GM12878 (cell line): ENCODE measurements at regions of chr22 and their contacts with region 1.

Region 1: DNA sequence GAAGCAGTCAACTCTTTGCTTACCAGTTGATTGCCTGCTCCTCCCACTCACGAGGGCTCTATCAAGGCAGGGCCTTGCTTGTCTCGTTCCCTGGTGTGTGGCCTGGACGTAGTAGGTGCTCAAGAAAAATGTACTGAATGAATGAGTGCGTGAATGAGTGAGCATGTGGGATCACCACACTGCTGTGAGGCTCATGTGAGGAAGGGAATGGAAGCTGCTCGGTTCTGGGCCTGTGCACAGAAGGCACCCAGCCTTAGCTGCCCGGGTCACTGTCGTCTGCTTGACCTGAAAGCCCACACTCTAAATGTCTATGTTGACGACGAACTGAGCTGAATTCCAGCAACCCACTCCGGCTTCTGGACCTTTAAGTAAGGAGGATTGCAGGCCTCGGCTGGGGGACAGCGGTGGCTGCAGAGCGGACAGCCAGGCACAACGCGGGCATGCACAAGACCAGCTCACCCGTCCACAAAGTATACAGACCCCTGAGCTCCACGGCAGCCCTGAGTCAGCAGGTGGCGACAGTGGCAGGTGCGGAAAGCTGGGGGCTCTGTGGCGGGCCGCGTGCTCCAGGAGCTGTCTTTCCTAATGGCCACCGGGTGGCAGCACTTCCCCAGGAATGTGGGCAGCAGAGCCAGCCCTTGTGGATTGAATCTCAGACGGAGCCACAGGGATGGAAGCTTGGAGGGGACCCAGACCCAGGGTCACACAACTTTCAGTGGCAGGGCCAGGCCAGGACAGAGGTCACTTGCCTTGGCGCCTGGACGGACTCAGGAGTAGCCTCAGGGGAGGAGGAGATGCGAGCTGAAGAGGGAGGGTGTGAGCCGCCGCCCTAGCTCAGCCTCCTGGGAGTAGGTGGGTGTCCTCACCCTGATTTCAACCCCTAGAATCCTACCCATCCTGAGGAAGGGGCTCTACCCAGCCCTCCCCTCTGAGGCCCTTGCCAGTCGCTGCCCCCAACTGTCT is 5.0 kb upstream of the PICK1 start:
- DNase-seq: peak; percentile 30
- ATAC-seq: peak; percentile 93
- H3K4me3 ChIP-seq: no peak overlapping the region
- H3K27ac ChIP-seq: no peak overlapping the region
- H3K4me1 ChIP-seq: no peaks in the 10 kb centered on the region; the same call in 1 of the 2 replicates
- H3K27me3 ChIP-seq: no peaks in the 10 kb centered on the region; a peak in 2 of 4 replicates
- CTCF ChIP-seq: peak; percentile 87 to 97 (median 94); a peak in 5 of 6 replicates
- EP300 ChIP-seq: no peak
- POLR2A ChIP-seq: no peak
- RAD21 ChIP-seq: peak; percentile 89

Region 2: GRCh38 chr22:36237462-36238372 is 1814.5 kb before region 1 on chr22:
- CTCF ChIA-PET with region 1: no interaction called
- POLR2A ChIA-PET with region 1: no interaction called
- RAD21 ChIA-PET with region 1: no interaction called
- SMC1A ChIA-PET with region 1: no interaction called
- in situ Hi-C with region 1: no loop called
- intact Hi-C with region 1: no loop called
- DNase-seq: no peak
- ATAC-seq: peak; percentile 18; the same call in 2 of the 3 replicates
- H3K4me3 ChIP-seq: peak overlapping the region; percentile 96
- H3K27ac ChIP-seq: peak overlapping the region; percentile 79
- H3K4me1 ChIP-seq: peaks cover 31% of the 10 kb centered on the region
- H3K27me3 ChIP-seq: no peaks in the 10 kb centered on the region
- CTCF ChIP-seq: no peak
- EP300 ChIP-seq: no peak
- POLR2A ChIP-seq: no peak
- RAD21 ChIP-seq: no peak

Region 3: GRCh38 chr22:38069372-38070249 is 17.4 kb after region 1 on chr22:
- CTCF ChIA-PET with region 1: interaction called, 17 read pairs
- POLR2A ChIA-PET with region 1: no interaction called
- RAD21 ChIA-PET with region 1: interaction called, 4 read pairs
- SMC1A ChIA-PET with region 1: no interaction called
- in situ Hi-C with region 1: no loop called
- intact Hi-C with region 1: no loop called
- DNase-seq: no peak
- ATAC-seq: no peak
- H3K4me3 ChIP-seq: no peak overlapping the region
- H3K27ac ChIP-seq: no peak overlapping the region
- H3K4me1 ChIP-seq: no peaks in the 10 kb centered on the region
- H3K27me3 ChIP-seq: no peaks in the 10 kb centered on the region
- CTCF ChIP-seq: peak in 2 of 3 experiments; percentile 14 to 27; a peak in 2 of 6 replicates
- EP300 ChIP-seq: no peak
- POLR2A ChIP-seq: no peak
- RAD21 ChIP-seq: peak; percentile 64

Region 4: GRCh38 chr22:38104084-38104483 is 51.9 kb after region 1 on chr22:
- CTCF ChIA-PET with region 1: interaction called, 34 read pairs
- POLR2A ChIA-PET with region 1: no interaction called
- RAD21 ChIA-PET with region 1: interaction called, 7 read pairs
- SMC1A ChIA-PET with region 1: interaction called, 5 read pairs
- in situ Hi-C with region 1: no loop called
- intact Hi-C with region 1: loop called (anchors 5 kb)
- DNase-seq: no peak
- ATAC-seq: peak; percentile 49; the same call in 1 of the 3 replicates
- H3K4me3 ChIP-seq: no peak overlapping the region
- H3K27ac ChIP-seq: no peak overlapping the region
- H3K4me1 ChIP-seq: no peaks in the 10 kb centered on the region
- H3K27me3 ChIP-seq: no peaks in the 10 kb centered on the region
- CTCF ChIP-seq: peak in 2 of 3 experiments; percentile 16 to 32; a peak in 3 of 6 replicates
- EP300 ChIP-seq: no peak
- POLR2A ChIP-seq: no peak
- RAD21 ChIP-seq: no peak

Region 5: DNA sequence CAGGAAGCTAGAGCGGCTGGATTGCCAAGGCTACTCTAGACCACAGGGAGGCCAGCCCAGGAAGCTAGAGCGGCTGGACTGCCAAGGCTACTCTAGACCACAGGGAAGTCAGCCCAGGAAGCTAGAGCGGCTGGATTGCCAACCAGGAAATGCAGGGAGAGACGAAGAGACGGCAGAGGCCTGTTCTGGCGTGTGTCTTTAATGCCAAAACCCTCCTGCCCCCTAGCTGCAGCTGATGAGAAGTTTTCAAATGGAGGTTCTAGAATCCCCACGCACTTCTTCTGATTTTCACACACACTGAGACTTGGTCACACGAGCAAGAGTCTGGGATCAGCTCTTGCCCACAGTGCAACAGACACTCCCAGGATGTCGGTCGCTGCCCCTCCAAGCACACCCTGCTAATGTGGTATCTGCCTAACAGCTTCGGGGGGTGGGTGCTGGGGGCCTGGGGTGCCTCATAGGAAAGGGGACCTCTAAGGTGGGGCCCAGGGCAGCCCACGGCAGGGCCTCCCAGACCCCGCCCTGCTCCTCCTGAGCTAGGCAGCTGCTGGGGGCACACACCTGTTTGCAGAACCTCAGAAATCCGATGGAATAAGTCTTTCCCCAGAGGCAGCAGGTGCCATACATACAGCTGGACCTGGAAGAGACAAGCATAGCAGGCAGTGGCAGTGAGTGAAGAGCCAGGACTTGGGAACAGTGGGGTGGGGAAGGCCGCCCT is 178.1 kb after region 1 on chr22:
- CTCF ChIA-PET with region 1: interaction called, 22 read pairs
- POLR2A ChIA-PET with region 1: no interaction called
- RAD21 ChIA-PET with region 1: interaction called, 14 read pairs
- SMC1A ChIA-PET with region 1: interaction called, 4 read pairs
- in situ Hi-C with region 1: no loop called
- intact Hi-C with region 1: no loop called
- DNase-seq: no peak
- ATAC-seq: peak; percentile 48; the same call in 2 of the 3 replicates
- H3K4me3 ChIP-seq: no peak overlapping the region
- H3K27ac ChIP-seq: no peak overlapping the region
- H3K4me1 ChIP-seq: no peaks in the 10 kb centered on the region
- H3K27me3 ChIP-seq: no peaks in the 10 kb centered on the region
- CTCF ChIP-seq: peak; percentile 42 to 45 (median 42); a peak in 5 of 6 replicates
- EP300 ChIP-seq: no peak
- POLR2A ChIP-seq: no peak
- RAD21 ChIP-seq: peak; percentile 74

Region 6: GRCh38 chr22:38347897-38348750 is 295.9 kb after region 1 on chr22:
- CTCF ChIA-PET with region 1: interaction called, 13 read pairs
- POLR2A ChIA-PET with region 1: no interaction called
- RAD21 ChIA-PET with region 1: interaction called, 8 read pairs
- SMC1A ChIA-PET with region 1: interaction called, 4 read pairs
- in situ Hi-C with region 1: loop called (anchors 5 kb)
- intact Hi-C with region 1: loop called (anchors 1 kb)
- DNase-seq: no peak
- ATAC-seq: peak; percentile 46
- H3K4me3 ChIP-seq: no peak overlapping the region
- H3K27ac ChIP-seq: no peak overlapping the region
- H3K4me1 ChIP-seq: no peaks in the 10 kb centered on the region
- H3K27me3 ChIP-seq: no peaks in the 10 kb centered on the region
- CTCF ChIP-seq: no peak
- EP300 ChIP-seq: no peak
- POLR2A ChIP-seq: no peak
- RAD21 ChIP-seq: no peak

Region 7: GRCh38 chr22:38455530-38456271 is 403.5 kb after region 1 on chr22:
- CTCF ChIA-PET with region 1: no interaction called
- POLR2A ChIA-PET with region 1: no interaction called
- RAD21 ChIA-PET with region 1: no interaction called
- SMC1A ChIA-PET with region 1: no interaction called
- in situ Hi-C with region 1: no loop called
- intact Hi-C with region 1: no loop called
- DNase-seq: no peak
- ATAC-seq: no peak
- H3K4me3 ChIP-seq: no peak overlapping the region; the same call in 1 of the 2 replicates
- H3K27ac ChIP-seq: no peak overlapping the region
- H3K4me1 ChIP-seq: peaks cover 6% of the 10 kb centered on the region; the same call in 1 of the 2 replicates
- H3K27me3 ChIP-seq: peaks cover 18% of the 10 kb centered on the region in 2 experiments
- CTCF ChIP-seq: no peak
- EP300 ChIP-seq: no peak
- POLR2A ChIP-seq: no peak
- RAD21 ChIP-seq: no peak

Region 8: GRCh38 chr22:38485783-38486182 is 433.6 kb after region 1 on chr22:
- CTCF ChIA-PET with region 1: interaction called, 4 read pairs
- POLR2A ChIA-PET with region 1: no interaction called
- RAD21 ChIA-PET with region 1: no interaction called
- SMC1A ChIA-PET with region 1: no interaction called
- in situ Hi-C with region 1: no loop called
- intact Hi-C with region 1: loop called (anchors 10 kb)
- DNase-seq: no peak
- ATAC-seq: no peak
- H3K4me3 ChIP-seq: no peak overlapping the region
- H3K27ac ChIP-seq: no peak overlapping the region
- H3K4me1 ChIP-seq: no peaks in the 10 kb centered on the region
- H3K27me3 ChIP-seq: no peaks in the 10 kb centered on the region
- CTCF ChIP-seq: no peak
- EP300 ChIP-seq: no peak
- POLR2A ChIP-seq: no peak
- RAD21 ChIP-seq: no peak

Region 9: DNA sequence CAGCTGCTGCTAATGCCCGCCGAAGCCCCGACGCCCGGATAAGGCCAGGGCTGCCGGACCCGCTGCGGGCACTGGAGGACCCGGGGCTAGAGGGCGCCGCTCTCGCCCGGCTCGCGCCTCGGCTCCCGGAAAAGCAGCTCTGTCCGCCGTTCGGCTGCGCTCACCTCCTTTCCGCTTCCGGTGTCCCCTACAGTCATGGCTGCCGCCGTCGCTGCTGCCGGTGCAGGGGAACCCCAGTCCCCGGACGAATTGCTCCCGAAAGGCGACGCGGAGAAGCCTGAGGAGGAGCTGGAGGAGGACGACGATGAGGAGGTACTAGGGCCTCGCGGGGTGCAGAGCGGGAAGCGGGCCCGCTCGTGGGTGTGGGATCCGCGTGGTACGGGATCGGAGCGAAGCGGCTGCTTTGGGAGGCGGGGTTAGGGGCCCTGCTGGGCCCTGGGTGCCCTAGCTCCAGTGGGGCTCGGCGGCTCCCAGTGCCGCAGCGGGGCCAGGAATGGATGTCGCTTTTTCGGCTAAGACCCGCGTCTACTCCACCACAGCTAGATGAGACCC is 629.7 kb after region 1 on chr22 and contains the start of gene TOMM22:
- CTCF ChIA-PET with region 1: interaction called, 3 read pairs
- POLR2A ChIA-PET with region 1: no interaction called
- RAD21 ChIA-PET with region 1: no interaction called
- SMC1A ChIA-PET with region 1: interaction called, 3 read pairs
- in situ Hi-C with region 1: no loop called
- intact Hi-C with region 1: loop called (anchors 2 kb)
- DNase-seq: peak; percentile 53
- ATAC-seq: peak; percentile 100
- H3K4me3 ChIP-seq: peak within 1 kb of the TSS; percentile 88
- H3K27ac ChIP-seq: peak within 1 kb of the TSS; percentile 81
- H3K4me1 ChIP-seq: no peaks in the 10 kb centered on the region; the same call in 1 of the 2 replicates
- H3K27me3 ChIP-seq: no peaks in the 10 kb centered on the region
- CTCF ChIP-seq: peak; percentile 77 to 92 (median 81)
- EP300 ChIP-seq: no peak
- POLR2A ChIP-seq: peak; percentile 99
- RAD21 ChIP-seq: no peak
- polyA plus RNA-seq, gene TOMM22: 37.6 to 62.2 TPM